Head of caudate nucleus (tissue), 42 donors: ENCODE measurements at regions of chr1 and their contacts with region 1.

Region 1: GRCh38 chr1:86833461-86834215 is 80.3 kb downstream of the SELENOF start:
- DNase-seq: peak; percentile 27 to 89 (median 66)

Region 2: GRCh38 chr1:86648255-86648654 is 185.4 kb before region 1 on chr1:
- intact Hi-C with region 1: no loop called
- DNase-seq: no peak

Region 3: DNA sequence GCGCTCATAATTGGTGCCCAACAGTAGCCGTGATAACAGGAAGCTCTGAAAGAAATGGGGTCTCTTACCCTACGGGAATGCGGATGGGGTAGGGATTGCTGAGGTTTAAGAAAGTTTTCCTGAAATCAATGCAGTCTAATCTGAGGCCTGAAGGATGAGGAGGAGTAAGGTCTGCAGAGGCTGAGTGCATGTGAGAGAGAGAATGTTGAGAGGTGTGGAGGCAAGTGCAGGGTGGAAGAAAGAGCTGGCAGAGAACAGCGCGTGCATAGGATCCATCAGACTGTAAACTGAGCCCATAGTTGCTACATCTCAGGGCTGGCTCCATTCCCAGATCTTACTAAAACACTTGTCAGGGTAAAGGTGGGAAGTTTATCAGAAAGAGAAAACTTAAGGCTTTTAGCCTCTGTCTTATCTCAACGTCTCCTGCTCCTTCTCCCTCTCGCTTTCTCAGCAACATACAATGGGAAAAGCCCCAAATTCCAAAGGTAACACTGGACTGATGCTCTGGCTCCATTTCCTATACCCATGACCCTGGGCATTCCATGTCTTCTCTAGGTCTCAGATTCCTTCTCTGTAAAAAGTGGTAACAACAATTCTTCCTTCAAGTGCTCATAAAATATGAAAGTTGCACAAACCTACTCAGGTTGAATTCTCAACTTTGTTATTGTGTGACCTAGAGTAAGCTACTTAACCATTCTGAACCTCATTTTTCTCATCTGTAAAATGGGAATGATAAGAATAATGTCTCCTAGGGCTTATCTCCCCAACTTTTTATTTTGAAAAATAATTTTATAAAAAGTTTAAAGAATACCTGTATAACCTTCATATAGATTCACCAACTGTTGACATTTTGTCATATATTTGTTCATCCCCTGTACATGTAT is 54.1 kb before region 1 on chr1:
- intact Hi-C with region 1: no loop called
- DNase-seq: peak in 31 of 42 donors; percentile 16 to 87 (median 56)

Region 4: DNA sequence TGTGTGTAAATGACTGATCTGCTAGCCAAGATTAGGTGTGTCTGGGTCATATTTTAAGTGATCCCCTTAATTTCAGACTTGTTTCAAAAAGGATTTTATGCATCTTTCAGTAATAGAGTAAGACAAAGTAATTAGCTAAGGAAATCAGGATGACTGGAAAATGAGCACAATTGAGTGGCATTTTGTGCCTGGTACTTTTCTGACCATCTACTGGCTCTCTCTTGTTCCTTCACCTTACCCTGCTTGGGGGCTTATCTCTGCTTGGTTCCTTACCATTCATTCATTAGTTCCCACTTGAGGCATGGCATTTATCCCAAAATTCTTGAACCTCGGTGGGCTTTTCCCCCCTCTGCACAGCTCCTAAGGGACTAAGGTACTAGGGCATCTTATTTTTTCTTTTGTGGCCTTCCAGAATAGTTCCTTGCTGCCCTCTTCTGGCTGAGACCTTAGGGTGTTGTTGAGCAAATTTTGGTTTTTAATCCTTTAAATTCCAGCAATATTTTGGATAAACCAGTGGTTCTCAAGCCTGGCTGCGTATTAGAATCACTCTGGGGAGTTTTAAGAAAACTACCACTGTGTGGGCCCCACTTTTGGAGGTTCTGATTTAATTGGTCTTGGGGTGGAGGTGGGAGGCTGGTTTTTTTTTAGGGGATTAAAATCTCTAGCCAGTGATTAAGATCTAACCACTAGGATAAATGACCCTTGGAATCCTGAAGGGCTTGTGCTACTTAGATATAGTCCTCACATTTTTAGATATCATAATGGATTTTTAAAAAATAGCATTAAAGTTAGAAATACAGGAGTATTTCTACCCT is 131.6 kb after region 1 on chr1:
- intact Hi-C with region 1: loop called (anchors 5 kb)
- DNase-seq: peak in 20 of 42 donors; percentile 8 to 65 (median 29)

Region 5: DNA sequence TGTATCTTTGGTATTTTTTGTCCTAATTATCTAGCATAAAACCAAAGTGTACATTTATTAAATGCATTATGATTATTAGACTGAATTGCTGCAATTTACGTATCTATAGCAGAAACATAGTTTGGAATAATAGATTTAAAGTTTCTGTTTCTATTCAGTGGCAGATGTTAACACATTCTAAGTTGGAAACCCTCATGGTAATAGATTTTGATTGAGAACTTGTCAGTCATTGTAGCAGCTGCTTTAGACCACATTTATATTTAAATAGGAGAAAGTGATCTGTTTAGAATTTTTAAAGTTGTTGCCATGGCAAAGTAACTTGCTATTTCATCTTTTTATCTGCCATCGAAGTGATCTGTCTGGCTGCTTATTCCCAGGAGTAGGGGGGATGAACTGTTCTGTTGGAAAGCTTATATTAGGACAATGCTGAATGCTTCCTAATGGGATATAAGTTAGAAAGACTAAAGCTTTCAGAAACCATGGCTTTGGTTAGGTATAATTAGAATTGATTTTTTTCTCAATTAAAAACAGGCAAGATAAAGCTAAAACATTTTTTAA is 142.4 kb after region 1 on chr1:
- intact Hi-C with region 1: no loop called
- DNase-seq: no peak

Region 6: GRCh38 chr1:87084244-87084836 is 250.7 kb after region 1 on chr1:
- intact Hi-C with region 1: loop called (anchors 5 kb)
- DNase-seq: no peak